Sigmoid colon (tissue), 7 donors: ENCODE measurements at regions of chr15 and their contacts with region 1.

Region 1: GRCh38 chr15:81274931-81275707 is 48.8 kb downstream of the STARD5 start:
- DNase-seq: peak; percentile 85
- H3K4me3 ChIP-seq: no peak overlapping the region
- H3K27ac ChIP-seq: peak overlapping the region; percentile 17 to 49 (median 35)
- H3K4me1 ChIP-seq: peaks cover 0 to 17% (median 12%) of the 10 kb centered on the region in 4 donors
- H3K27me3 ChIP-seq: no peaks in the 10 kb centered on the region
- CTCF ChIP-seq: peak; percentile 74 to 85 (median 78)
- EP300 ChIP-seq: no peak
- POLR2A ChIP-seq: no peak

Region 2: GRCh38 chr15:81336568-81336967 is 61.4 kb after region 1 on chr15:
- intact Hi-C with region 1: loop called (anchors 5 kb)
- DNase-seq: no peak
- H3K4me3 ChIP-seq: no peak overlapping the region
- H3K27ac ChIP-seq: no peak overlapping the region
- H3K4me1 ChIP-seq: peaks cover 0 to 29% (median 20%) of the 10 kb centered on the region in 4 donors
- H3K27me3 ChIP-seq: no peaks in the 10 kb centered on the region
- CTCF ChIP-seq: no peak
- EP300 ChIP-seq: no peak
- POLR2A ChIP-seq: no peak